ENCODE measurements at regions of chr7 and their contacts with region 1.

Region 1: GRCh38 chr7:37234928-37235327 is 213.7 kb downstream of the ELMO1 start:
- DNase-seq: peak; percentile 51 to 72 (median 64)
- H3K4me3 ChIP-seq: no peak overlapping the region
- H3K27ac ChIP-seq: no peak overlapping the region
- H3K4me1 ChIP-seq: peaks cover 0 to 16% (median 6%) of the 10 kb centered on the region in 4 experiments
- H3K27me3 ChIP-seq: no peaks in the 10 kb centered on the region

Region 2: GRCh38 chr7:37208528-37208927 is 26.4 kb before region 1 on chr7:
- CTCF ChIA-PET with region 1: interaction called, 13 read pairs
- POLR2A ChIA-PET with region 1: no interaction called
- DNase-seq: peak; percentile 59 to 83 (median 82)
- H3K4me3 ChIP-seq: no peak overlapping the region
- H3K27ac ChIP-seq: no peak overlapping the region
- H3K4me1 ChIP-seq: peaks cover 3 to 26% (median 19%) of the 10 kb centered on the region in 4 experiments
- H3K27me3 ChIP-seq: no peaks in the 10 kb centered on the region

Region 3: DNA sequence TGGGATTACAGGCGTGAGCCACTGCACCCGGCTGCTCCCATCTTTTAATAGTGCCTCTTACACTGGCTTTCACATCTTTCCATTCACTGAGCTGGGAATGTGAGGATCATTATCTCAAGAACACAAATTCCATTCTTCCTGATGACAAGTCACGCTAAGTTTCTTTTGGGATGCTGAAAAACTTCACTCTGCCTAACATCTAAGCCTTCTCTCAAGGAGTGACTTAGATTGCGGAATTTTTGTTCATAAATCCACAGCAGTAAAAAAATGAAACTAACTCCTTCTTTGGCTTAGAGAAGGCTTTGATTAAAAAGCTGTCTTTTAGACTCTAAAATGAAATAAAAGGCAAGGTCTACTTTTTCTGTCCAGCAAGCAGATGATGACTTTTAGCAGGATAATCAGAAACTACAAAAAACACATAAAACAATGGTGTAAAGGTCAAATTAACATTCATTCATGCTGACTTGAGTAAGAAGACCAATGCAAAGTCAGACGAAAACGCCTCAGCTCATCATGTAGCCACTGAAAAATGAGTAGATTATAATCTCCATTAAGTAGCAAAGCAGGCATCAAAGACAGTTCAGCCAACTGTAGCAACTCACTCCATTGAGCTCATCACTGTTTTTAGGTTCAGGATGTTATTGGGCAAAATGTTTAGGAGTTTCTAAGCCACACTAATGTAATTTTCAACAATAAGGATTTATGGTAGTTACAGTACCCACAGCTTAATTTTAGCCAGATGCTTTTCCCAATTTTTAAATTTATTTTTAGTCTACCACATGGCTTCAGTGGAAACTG is 35.0 kb after region 1 on chr7:
- CTCF ChIA-PET with region 1: interaction called, 16 read pairs
- POLR2A ChIA-PET with region 1: no interaction called
- DNase-seq: no peak
- H3K4me3 ChIP-seq: no peak overlapping the region
- H3K27ac ChIP-seq: no peak overlapping the region
- H3K4me1 ChIP-seq: peaks cover 8 to 18% (median 15%) of the 10 kb centered on the region in 4 experiments
- H3K27me3 ChIP-seq: no peaks in the 10 kb centered on the region

Region 4: DNA sequence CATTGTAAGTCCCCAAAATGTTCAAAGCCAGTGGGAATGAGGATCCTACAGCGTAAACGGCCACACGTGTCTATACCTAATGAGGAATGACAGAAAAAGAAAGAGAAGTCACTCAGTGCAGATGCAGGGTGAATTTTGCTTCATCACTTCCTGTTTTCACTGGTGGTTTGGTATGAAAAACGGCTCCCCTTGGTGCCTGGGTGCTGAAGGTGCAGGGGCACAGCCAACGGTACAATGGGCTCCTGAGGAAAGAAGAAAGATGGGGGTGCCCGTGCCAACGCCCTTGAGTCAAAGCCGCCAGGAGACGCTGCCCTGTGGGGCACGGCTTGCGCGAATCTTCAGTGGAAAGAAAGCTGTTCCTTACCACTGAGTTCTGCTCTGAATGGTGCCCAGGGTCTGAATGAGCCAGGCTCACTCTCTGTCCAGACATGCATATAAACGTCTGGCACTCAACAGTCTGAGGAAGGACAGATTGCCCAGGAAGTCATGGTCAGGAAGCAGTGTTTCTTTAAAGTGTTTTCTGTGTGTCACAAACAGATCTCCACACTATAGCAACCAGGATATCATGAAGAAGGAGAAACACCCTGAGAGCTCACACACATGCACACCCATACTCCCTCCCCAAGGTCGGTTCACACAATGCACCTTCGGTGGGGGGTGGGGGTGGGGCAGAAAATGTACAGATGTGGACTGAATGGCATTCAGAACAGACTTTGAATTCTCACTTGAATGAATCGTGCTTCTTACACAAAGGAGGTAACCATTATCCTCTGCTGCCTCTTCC is 108.0 kb after region 1 on chr7:
- CTCF ChIA-PET with region 1: interaction called, 10 read pairs
- POLR2A ChIA-PET with region 1: no interaction called
- DNase-seq: peak; percentile 94 to 97 (median 95)
- H3K4me3 ChIP-seq: peak overlapping the region; percentile 18 to 97 (median 87)
- H3K27ac ChIP-seq: peak overlapping the region; percentile 91 to 93
- H3K4me1 ChIP-seq: peaks cover 42 to 94% (median 64%) of the 10 kb centered on the region in 4 experiments
- H3K27me3 ChIP-seq: no peaks in the 10 kb centered on the region

Region 5: DNA sequence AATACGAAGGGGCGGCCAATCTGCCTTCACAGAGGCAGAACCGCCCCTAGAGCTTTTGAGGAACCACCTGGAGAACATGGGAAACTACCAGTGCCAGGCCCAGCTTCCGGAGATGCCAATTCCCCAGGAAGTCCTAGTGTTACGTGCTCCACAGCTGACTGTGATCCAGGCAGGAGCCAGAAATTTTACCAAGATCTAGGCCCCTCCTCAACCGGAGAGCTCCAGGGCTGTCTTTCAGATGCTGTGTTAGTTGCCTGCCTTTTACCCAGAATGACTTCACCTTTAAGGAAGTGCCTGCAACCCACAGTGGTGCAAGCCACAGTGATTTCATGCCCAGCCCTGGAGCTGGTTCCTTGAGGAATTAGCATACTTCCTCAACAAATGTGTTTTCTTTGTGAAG is 150.9 kb after region 1 on chr7:
- CTCF ChIA-PET with region 1: no interaction called
- POLR2A ChIA-PET with region 1: no interaction called
- DNase-seq: peak in 2 of 3 donors; percentile 87
- H3K4me3 ChIP-seq: no peak overlapping the region
- H3K27ac ChIP-seq: no peak overlapping the region
- H3K4me1 ChIP-seq: peaks cover 10 to 50% (median 39%) of the 10 kb centered on the region in 4 experiments
- H3K27me3 ChIP-seq: no peaks in the 10 kb centered on the region

Region 6: GRCh38 chr7:37495574-37496184 is 260.8 kb after region 1 on chr7:
- CTCF ChIA-PET with region 1: interaction called, 11 read pairs
- POLR2A ChIA-PET with region 1: no interaction called
- DNase-seq: peak; percentile 43 to 68 (median 65)
- H3K4me3 ChIP-seq: no peak overlapping the region
- H3K27ac ChIP-seq: no peak overlapping the region
- H3K4me1 ChIP-seq: peaks cover 0 to 8% (median 7%) of the 10 kb centered on the region in 4 experiments
- H3K27me3 ChIP-seq: no peaks in the 10 kb centered on the region

Region 7: DNA sequence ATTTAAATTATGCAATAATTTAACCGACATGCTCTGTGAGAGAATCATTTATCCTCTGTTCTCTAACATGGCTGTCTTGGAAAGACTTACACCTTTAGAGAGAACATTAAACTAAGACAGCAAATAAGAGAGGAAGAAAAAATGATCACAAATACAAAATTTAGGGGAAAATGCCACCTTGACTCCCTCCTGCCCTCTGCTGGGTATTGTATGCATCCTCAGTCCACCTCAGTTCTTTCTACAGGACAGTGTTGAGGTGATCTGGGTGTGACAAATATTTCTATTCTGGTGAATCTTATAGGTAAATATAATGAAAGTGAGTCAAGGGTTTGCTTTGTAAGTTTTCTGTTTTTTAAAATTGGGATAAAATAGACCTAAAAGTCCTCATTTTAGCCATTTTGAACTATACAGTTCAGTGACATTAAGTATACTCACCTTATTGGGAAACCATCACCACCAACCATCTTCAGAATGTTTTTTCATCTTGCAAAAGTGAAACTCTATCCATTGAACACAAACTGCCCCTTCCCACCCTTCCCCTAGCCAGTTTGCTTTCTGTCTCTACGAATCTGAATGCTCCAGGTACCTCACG is 275.2 kb after region 1 on chr7:
- CTCF ChIA-PET with region 1: interaction called, 44 read pairs
- POLR2A ChIA-PET with region 1: no interaction called
- DNase-seq: peak; percentile 36 to 70 (median 57)
- H3K4me3 ChIP-seq: no peak overlapping the region
- H3K27ac ChIP-seq: no peak overlapping the region
- H3K4me1 ChIP-seq: peaks cover 0 to 2% (median 0%) of the 10 kb centered on the region in 4 experiments
- H3K27me3 ChIP-seq: no peaks in the 10 kb centered on the region

Region 8: GRCh38 chr7:37833107-37833817 is 598.3 kb after region 1 on chr7:
- CTCF ChIA-PET with region 1: interaction called, 21 read pairs
- POLR2A ChIA-PET with region 1: no interaction called
- DNase-seq: peak; percentile 80 to 91 (median 89)
- H3K4me3 ChIP-seq: peak overlapping the region; percentile 38 to 87 (median 66)
- H3K27ac ChIP-seq: no peak overlapping the region
- H3K4me1 ChIP-seq: peaks cover 5 to 15% (median 7%) of the 10 kb centered on the region in 4 experiments
- H3K27me3 ChIP-seq: no peaks in the 10 kb centered on the region